CD4-positive, alpha-beta memory T cell (primary cell): ENCODE measurements at regions of chr16 and their contacts with region 1.

Region 1: GRCh38 chr16:3654249-3654991 is at the start of gene DNASE1:
- DNase-seq: peak; percentile 38 to 66 (median 46)
- H3K4me3 ChIP-seq: no peak within 1 kb of the TSS
- H3K4me3 Mint-ChIP-seq: peak within 1 kb of the TSS in 1 of 8 donors; percentile 45
- H3K27ac ChIP-seq: no peak within 1 kb of the TSS
- H3K27ac Mint-ChIP-seq: peak within 1 kb of the TSS in 4 of 7 donors; percentile 19 to 74 (median 48)
- H3K4me1 ChIP-seq: no peaks in the 10 kb centered on the region
- H3K4me1 Mint-ChIP-seq: peaks cover 0 to 11% (median 3%) of the 10 kb centered on the region in 4 donors
- H3K27me3 ChIP-seq: no peaks in the 10 kb centered on the region
- H3K27me3 Mint-ChIP-seq: no peaks in the 10 kb centered on the region
- total RNA-seq, gene DNASE1: 51.2 to 59.9 TPM

Region 2: GRCh38 chr16:3578610-3579551 is 75.5 kb before region 1 on chr16:
- CTCF ChIA-PET with region 1: no interaction called
- POLR2A ChIA-PET with region 1: no interaction called
- intact Hi-C with region 1: loop called (anchors 5 kb)
- DNase-seq: peak; percentile 43 to 69 (median 57)
- H3K4me3 ChIP-seq: peak overlapping the region; percentile 47 to 61
- H3K4me3 Mint-ChIP-seq: peak overlapping the region; percentile 94 to 99 (median 98)
- H3K27ac ChIP-seq: peak overlapping the region; percentile 75
- H3K27ac Mint-ChIP-seq: peak overlapping the region; percentile 90 to 98 (median 95)
- H3K4me1 ChIP-seq: peaks cover 45% of the 10 kb centered on the region
- H3K4me1 Mint-ChIP-seq: peaks cover 22 to 65% (median 44%) of the 10 kb centered on the region in 4 donors
- H3K27me3 ChIP-seq: no peaks in the 10 kb centered on the region
- H3K27me3 Mint-ChIP-seq: no peaks in the 10 kb centered on the region

Region 3: GRCh38 chr16:3637371-3637923 is 17.0 kb before region 1 on chr16:
- CTCF ChIA-PET with region 1: no interaction called
- POLR2A ChIA-PET with region 1: no interaction called
- intact Hi-C with region 1: no loop called
- DNase-seq: peak in 4 of 5 donors; percentile 14 to 24 (median 18)
- H3K4me3 ChIP-seq: no peak overlapping the region
- H3K4me3 Mint-ChIP-seq: peak overlapping the region in 3 of 8 donors; percentile 26 to 56 (median 29)
- H3K27ac ChIP-seq: no peak overlapping the region
- H3K27ac Mint-ChIP-seq: peak overlapping the region; percentile 33 to 81 (median 53)
- H3K4me1 ChIP-seq: peaks cover 13% of the 10 kb centered on the region
- H3K4me1 Mint-ChIP-seq: peaks cover 28 to 37% (median 31%) of the 10 kb centered on the region in 4 donors
- H3K27me3 ChIP-seq: no peaks in the 10 kb centered on the region
- H3K27me3 Mint-ChIP-seq: no peaks in the 10 kb centered on the region